Activated naive CD4-positive, alpha-beta T cell treated with anti-CD3 and anti-CD28 coated beads for 36 hours (primary cell): ENCODE measurements at regions of chr12 and their contacts with region 1.

Region 1: GRCh38 chr12:2034633-2035430 is 18.0 kb upstream of the CACNA1C start:
- DNase-seq: peak; percentile 88
- H3K4me3 Mint-ChIP-seq: peak overlapping the region; percentile 59
- H3K27ac Mint-ChIP-seq: no peak overlapping the region
- H3K4me1 Mint-ChIP-seq: peaks cover 10% of the 10 kb centered on the region
- H3K27me3 Mint-ChIP-seq: peaks cover 13% of the 10 kb centered on the region

Region 2: DNA sequence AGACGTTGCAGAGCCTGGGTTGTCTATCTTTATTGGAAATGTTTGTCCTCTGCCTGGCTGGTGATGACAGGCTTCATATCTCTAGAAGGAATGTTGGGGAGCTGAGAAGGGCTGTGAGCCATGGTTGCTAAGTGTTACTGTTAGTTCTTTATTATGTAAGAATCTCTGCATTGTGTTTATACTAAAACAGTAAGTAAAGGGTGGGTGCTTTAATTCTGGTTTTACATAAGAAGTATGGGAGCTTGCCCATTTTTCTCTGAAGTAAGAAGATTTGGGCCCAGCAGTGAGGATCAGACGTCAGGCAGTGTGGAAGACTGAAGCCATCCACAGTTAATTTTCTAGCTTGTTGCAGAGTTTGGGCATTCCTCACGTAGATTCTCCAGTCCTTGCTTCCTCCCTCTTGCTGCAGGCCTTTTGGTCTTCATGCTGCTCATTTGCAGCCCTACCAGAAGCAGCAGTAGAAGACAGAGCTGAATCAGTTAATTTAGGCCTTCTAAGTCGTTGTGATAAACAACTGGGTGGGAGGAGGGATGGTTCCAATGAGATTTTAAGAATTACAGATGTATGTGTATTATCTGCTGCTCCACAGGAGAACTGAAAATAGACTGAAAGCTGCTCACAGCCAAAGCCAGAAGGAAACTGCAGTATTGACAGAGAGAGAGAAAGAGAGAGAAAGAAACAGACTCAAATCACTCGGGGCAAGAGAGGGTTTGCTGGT is 384.4 kb before region 1 on chr12:
- CTCF ChIA-PET with region 1: no interaction called
- intact Hi-C with region 1: loop called (anchors 2 kb)
- DNase-seq: no peak
- H3K4me3 Mint-ChIP-seq: no peak overlapping the region
- H3K27ac Mint-ChIP-seq: no peak overlapping the region
- H3K4me1 Mint-ChIP-seq: peaks cover 1% of the 10 kb centered on the region
- H3K27me3 Mint-ChIP-seq: peaks cover 2% of the 10 kb centered on the region

Region 3: GRCh38 chr12:2004113-2004929 is 30.5 kb before region 1 on chr12 and contains the start of gene DCP1B:
- CTCF ChIA-PET with region 1: interaction called, 5 read pairs
- intact Hi-C with region 1: loop called (anchors 1 kb)
- DNase-seq: peak; percentile 98
- H3K4me3 Mint-ChIP-seq: peak within 1 kb of the TSS; percentile 88
- H3K27ac Mint-ChIP-seq: peak within 1 kb of the TSS; percentile 96
- H3K4me1 Mint-ChIP-seq: peaks cover 23% of the 10 kb centered on the region
- H3K27me3 Mint-ChIP-seq: no peaks in the 10 kb centered on the region
- total RNA-seq, gene DCP1B: 13.1 to 13.5 TPM

Region 4: DNA sequence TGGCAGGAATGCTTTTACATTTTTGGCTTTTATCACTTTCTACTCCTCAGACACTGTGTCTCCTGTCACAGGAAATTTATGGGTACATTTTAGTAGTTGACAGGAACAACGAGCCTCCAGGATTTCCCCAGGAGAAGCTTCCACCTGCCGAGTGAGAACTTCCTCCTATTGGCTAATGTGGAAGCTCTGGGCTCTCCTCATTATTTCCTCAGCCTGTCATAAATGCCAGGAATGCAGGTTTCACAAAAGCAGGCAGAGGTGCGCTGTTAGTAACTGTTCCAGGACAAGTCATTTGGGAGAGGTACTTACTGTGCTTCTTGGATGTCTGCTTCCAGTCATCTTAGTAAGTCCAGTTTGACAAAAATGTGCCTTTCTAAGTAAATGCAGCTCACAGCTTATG is 11.5 kb before region 1 on chr12:
- CTCF ChIA-PET with region 1: interaction called, 17 read pairs
- intact Hi-C with region 1: no loop called
- DNase-seq: no peak
- H3K4me3 Mint-ChIP-seq: no peak overlapping the region
- H3K27ac Mint-ChIP-seq: no peak overlapping the region
- H3K4me1 Mint-ChIP-seq: no peaks in the 10 kb centered on the region
- H3K27me3 Mint-ChIP-seq: peaks cover 9% of the 10 kb centered on the region